CD4-positive, alpha-beta T cell (primary cell): ENCODE measurements at regions of chrX and their contacts with region 1.

Region 1: GRCh38 chrX:101390664-101391525 is at the start of gene RPL36A:
- DNase-seq: peak; percentile 57 to 92 (median 73)
- ATAC-seq: peak; percentile 92
- H3K4me3 ChIP-seq: peak within 1 kb of the TSS; percentile 71
- H3K4me3 Mint-ChIP-seq: peak within 1 kb of the TSS; percentile 95
- H3K27ac ChIP-seq: peak within 1 kb of the TSS; percentile 41 to 82
- H3K27ac Mint-ChIP-seq: peak within 1 kb of the TSS; percentile 95
- H3K4me1 ChIP-seq: peaks cover 15% of the 10 kb centered on the region
- H3K4me1 Mint-ChIP-seq: peaks cover 27% of the 10 kb centered on the region
- H3K27me3 ChIP-seq: no peaks in the 10 kb centered on the region
- H3K27me3 Mint-ChIP-seq: no peaks in the 10 kb centered on the region
- CTCF ChIP-seq: peak; percentile 72
- total RNA-seq, gene RPL36A: 417 to 536 TPM

Region 2: DNA sequence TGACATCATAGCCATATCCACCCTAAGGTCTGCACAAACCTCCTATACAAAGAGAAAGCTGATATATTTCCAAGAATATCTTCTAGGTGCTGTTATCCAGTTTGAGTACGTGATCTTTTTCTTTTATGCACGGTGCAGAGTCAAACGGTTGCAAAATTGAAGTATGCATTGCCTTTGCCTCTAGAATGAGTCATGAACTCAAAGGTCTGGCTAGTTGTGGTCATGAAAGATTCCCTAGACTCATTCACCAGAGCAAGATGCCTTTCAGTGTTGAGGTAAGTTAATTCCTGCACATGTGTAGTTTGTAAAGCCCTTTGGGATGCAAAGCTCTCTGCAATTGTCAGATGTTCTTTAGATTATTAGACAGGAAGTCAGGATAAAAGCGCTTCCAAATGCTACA is 1685.2 kb before region 1 on chrX:
- CTCF ChIA-PET with region 1: no interaction called
- POLR2A ChIA-PET with region 1: no interaction called
- intact Hi-C with region 1: no loop called
- DNase-seq: no peak
- ATAC-seq: no peak
- H3K4me3 ChIP-seq: no peak overlapping the region
- H3K4me3 Mint-ChIP-seq: no peak overlapping the region
- H3K27ac ChIP-seq: no peak overlapping the region
- H3K27ac Mint-ChIP-seq: no peak overlapping the region
- H3K4me1 ChIP-seq: no peaks in the 10 kb centered on the region
- H3K4me1 Mint-ChIP-seq: no peaks in the 10 kb centered on the region
- H3K27me3 ChIP-seq: no peaks in the 10 kb centered on the region
- H3K27me3 Mint-ChIP-seq: no peaks in the 10 kb centered on the region
- CTCF ChIP-seq: no peak

Region 3: GRCh38 chrX:100819837-100820666 is 570.8 kb before region 1 on chrX and contains the start of gene CSTF2:
- CTCF ChIA-PET with region 1: no interaction called
- POLR2A ChIA-PET with region 1: no interaction called
- intact Hi-C with region 1: loop called in 1 of 2 experiments (anchors 5 kb)
- DNase-seq: peak; percentile 62 to 91 (median 72)
- ATAC-seq: peak; percentile 93
- H3K4me3 ChIP-seq: peak within 1 kb of the TSS; percentile 88
- H3K4me3 Mint-ChIP-seq: peak within 1 kb of the TSS; percentile 87
- H3K27ac ChIP-seq: peak within 1 kb of the TSS; percentile 77 to 80
- H3K27ac Mint-ChIP-seq: peak within 1 kb of the TSS; percentile 84
- H3K4me1 ChIP-seq: peaks cover 8% of the 10 kb centered on the region
- H3K4me1 Mint-ChIP-seq: peaks cover 11% of the 10 kb centered on the region
- H3K27me3 ChIP-seq: no peaks in the 10 kb centered on the region
- H3K27me3 Mint-ChIP-seq: peaks cover 19% of the 10 kb centered on the region
- CTCF ChIP-seq: no peak
- total RNA-seq, gene CSTF2: 8.3 to 10.1 TPM

Region 4: GRCh38 chrX:101051549-101052302 is 339.2 kb before region 1 on chrX and contains the start of gene TRMT2B:
- CTCF ChIA-PET with region 1: no interaction called
- POLR2A ChIA-PET with region 1: no interaction called
- intact Hi-C with region 1: loop called in 1 of 2 experiments (anchors 5 kb)
- DNase-seq: peak; percentile 65 to 88 (median 80)
- ATAC-seq: peak; percentile 85
- H3K4me3 ChIP-seq: peak within 1 kb of the TSS; percentile 78
- H3K4me3 Mint-ChIP-seq: peak within 1 kb of the TSS; percentile 90
- H3K27ac ChIP-seq: peak within 1 kb of the TSS; percentile 77 to 97
- H3K27ac Mint-ChIP-seq: peak within 1 kb of the TSS; percentile 95
- H3K4me1 ChIP-seq: peaks cover 29% of the 10 kb centered on the region
- H3K4me1 Mint-ChIP-seq: peaks cover 36% of the 10 kb centered on the region
- H3K27me3 ChIP-seq: no peaks in the 10 kb centered on the region
- H3K27me3 Mint-ChIP-seq: no peaks in the 10 kb centered on the region
- CTCF ChIP-seq: no peak
- total RNA-seq, gene TRMT2B: 27.9 to 28.0 TPM

Region 5: DNA sequence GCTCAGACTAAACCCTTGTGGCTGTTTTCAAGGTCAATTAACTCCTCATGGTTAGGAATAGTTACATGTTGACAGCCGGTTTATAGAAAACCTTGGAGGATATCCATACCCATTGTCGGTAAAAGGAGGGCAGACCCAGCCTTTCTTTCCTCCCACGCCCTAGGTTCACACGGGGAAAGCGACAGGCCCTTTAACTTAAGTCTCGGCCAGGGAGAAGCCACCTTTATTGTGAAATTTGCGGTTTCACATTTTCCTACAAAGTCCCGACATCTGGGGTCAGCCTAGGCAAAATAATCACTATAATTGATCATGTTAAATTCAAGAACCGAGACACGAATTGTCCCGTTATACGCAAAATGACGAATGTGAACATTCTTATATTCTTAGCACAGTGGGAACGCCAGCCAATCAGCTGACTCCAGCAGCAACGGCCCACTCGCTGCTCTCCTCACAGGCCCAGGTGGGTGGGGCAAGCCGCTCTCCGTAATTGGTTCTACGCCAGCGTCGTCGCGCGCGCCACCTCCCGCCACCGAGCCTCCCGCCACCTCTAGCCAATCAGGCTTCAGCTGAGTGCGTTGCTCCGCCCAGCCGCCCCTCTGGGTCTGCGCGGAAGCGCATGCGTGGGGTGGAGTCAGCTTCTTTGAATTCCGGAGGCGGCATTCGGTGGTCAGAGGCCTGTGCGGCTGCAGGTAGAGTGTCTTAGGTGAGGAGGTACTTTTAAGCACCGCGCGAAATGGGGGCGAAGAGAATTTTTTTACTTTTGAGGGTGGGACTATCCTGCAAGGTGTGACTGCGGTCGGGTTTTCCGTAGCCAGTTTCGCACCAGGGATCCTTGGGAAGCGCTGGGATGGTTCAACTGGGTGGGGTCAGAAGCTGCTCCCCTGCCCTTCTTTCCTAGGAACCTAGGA is 293.1 kb before region 1 on chrX and contains the start of gene CENPI:
- CTCF ChIA-PET with region 1: no interaction called
- POLR2A ChIA-PET with region 1: no interaction called
- intact Hi-C with region 1: loop called in 1 of 2 experiments (anchors 5 kb)
- DNase-seq: peak; percentile 86 to 96 (median 91)
- ATAC-seq: peak; percentile 99
- H3K4me3 ChIP-seq: peak within 1 kb of the TSS; percentile 67
- H3K4me3 Mint-ChIP-seq: peak within 1 kb of the TSS; percentile 92
- H3K27ac ChIP-seq: peak within 1 kb of the TSS; percentile 66 to 87
- H3K27ac Mint-ChIP-seq: peak within 1 kb of the TSS; percentile 95
- H3K4me1 ChIP-seq: peaks cover 7% of the 10 kb centered on the region
- H3K4me1 Mint-ChIP-seq: peaks cover 22% of the 10 kb centered on the region
- H3K27me3 ChIP-seq: no peaks in the 10 kb centered on the region
- H3K27me3 Mint-ChIP-seq: no peaks in the 10 kb centered on the region
- CTCF ChIP-seq: no peak
- total RNA-seq, gene CENPI: 0.28 to 0.49 TPM

Region 6: GRCh38 chrX:101348452-101349192 is 42.3 kb before region 1 on chrX and contains the start of gene TIMM8A:
- CTCF ChIA-PET with region 1: interaction called, 26 read pairs
- POLR2A ChIA-PET with region 1: interaction called, 18 read pairs
- intact Hi-C with region 1: loop called in 1 of 2 experiments (anchors 2 kb)
- DNase-seq: peak; percentile 48 to 87 (median 68)
- ATAC-seq: peak; percentile 99
- H3K4me3 ChIP-seq: peak within 1 kb of the TSS; percentile 86
- H3K4me3 Mint-ChIP-seq: peak within 1 kb of the TSS; percentile 92
- H3K27ac ChIP-seq: peak within 1 kb of the TSS; percentile 67 to 88
- H3K27ac Mint-ChIP-seq: peak within 1 kb of the TSS; percentile 88
- H3K4me1 ChIP-seq: peaks cover 15% of the 10 kb centered on the region
- H3K4me1 Mint-ChIP-seq: peaks cover 19% of the 10 kb centered on the region
- H3K27me3 ChIP-seq: no peaks in the 10 kb centered on the region
- H3K27me3 Mint-ChIP-seq: no peaks in the 10 kb centered on the region
- CTCF ChIP-seq: no peak
- total RNA-seq, gene TIMM8A: 5.0 to 6.4 TPM

Region 7: GRCh38 chrX:101407748-101408531 is 17.0 kb after region 1 on chrX and contains the starts of genes GLA and HNRNPH2:
- CTCF ChIA-PET with region 1: interaction called, 12 read pairs
- POLR2A ChIA-PET with region 1: interaction called, 6 read pairs
- intact Hi-C with region 1: loop called (anchors 1 to 2 kb)
- DNase-seq: peak; percentile 67 to 97 (median 80)
- ATAC-seq: peak; percentile 91
- H3K4me3 ChIP-seq: peak within 1 kb of the TSS; percentile 85
- H3K4me3 Mint-ChIP-seq: peak within 1 kb of the TSS; percentile 97
- H3K27ac ChIP-seq: peak within 1 kb of the TSS; percentile 92 to 99
- H3K27ac Mint-ChIP-seq: peak within 1 kb of the TSS; percentile 97
- H3K4me1 ChIP-seq: peaks cover 29% of the 10 kb centered on the region
- H3K4me1 Mint-ChIP-seq: peaks cover 41% of the 10 kb centered on the region
- H3K27me3 ChIP-seq: no peaks in the 10 kb centered on the region
- H3K27me3 Mint-ChIP-seq: no peaks in the 10 kb centered on the region
- CTCF ChIP-seq: no peak
- total RNA-seq, gene GLA: 26.6 to 26.8 TPM
- total RNA-seq, gene HNRNPH2: 50.9 to 51.4 TPM